Aorta (tissue), 5 donors: ENCODE measurements at regions of chr9 and their contacts with region 1.

Region 1: DNA sequence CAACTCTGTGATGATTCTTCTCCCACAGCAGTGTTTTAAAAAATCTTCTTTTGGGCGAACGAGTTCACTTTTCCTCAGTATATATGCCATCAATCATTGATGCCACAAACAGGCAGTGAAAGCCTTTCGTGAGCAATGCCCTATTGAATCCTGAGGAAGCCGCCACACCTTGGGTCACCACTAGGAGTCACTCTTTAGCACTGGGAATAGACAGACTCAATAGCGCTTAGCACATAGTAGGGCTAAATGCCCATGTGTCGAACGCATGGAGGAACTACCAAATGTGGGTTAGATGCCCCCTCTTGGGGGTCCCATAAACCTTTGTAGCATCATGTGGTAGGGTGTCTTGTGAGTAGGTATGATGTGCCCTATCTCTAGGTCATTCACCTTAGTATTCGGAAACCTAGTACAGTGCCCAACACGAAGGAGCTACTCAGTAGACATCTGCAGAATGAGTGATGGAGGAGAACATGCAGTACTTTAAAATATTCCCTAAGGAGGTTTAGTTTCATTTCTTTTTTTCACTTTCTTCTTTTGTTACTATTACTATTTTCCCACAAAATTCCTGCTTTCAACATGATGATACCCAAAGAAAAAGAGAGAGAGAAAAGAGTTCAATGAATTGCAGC is 603.7 kb downstream of the BNC2 start:
- DNase-seq: no peak
- ATAC-seq: no peak
- H3K4me3 ChIP-seq: peak overlapping the region in 1 of 2 donors; percentile 22
- H3K27ac ChIP-seq: no peak overlapping the region
- H3K4me1 ChIP-seq: no peaks in the 10 kb centered on the region
- H3K27me3 ChIP-seq: no peaks in the 10 kb centered on the region

Region 2: GRCh38 chr9:16012621-16013020 is 254.1 kb before region 1 on chr9:
- intact Hi-C with region 1: no loop called
- DNase-seq: no peak
- ATAC-seq: no peak
- H3K4me3 ChIP-seq: no peak overlapping the region
- H3K27ac ChIP-seq: no peak overlapping the region
- H3K4me1 ChIP-seq: no peaks in the 10 kb centered on the region
- H3K27me3 ChIP-seq: no peaks in the 10 kb centered on the region

Region 3: GRCh38 chr9:16213781-16214515 is 52.8 kb before region 1 on chr9:
- intact Hi-C with region 1: loop called (anchors 5 to 10 kb)
- DNase-seq: peak; percentile 76 to 81
- ATAC-seq: peak; percentile 94
- H3K4me3 ChIP-seq: no peak overlapping the region
- H3K27ac ChIP-seq: peak overlapping the region; percentile 19 to 79
- H3K4me1 ChIP-seq: peaks cover 0 to 2% of the 10 kb centered on the region in 2 donors
- H3K27me3 ChIP-seq: no peaks in the 10 kb centered on the region

Region 4: DNA sequence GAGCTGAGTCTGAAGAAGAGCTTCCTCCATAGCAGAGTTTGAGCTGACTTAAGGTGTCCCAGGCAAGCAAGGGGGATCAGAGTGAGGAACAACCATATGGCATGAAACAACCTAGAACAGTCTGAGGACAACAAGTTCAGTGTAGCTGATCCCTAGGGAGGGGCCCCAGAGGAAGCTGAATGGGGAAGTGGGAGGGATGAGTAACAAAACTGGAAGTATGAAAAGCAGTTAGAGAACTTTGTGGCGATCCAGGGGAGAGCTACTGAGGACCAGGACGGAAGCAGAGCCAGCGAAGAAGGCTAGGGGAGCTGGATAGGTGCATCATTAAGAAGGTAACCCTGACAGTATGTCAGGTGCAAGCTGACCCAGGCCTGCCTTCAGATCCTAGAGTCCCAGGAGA is 22.9 kb after region 1 on chr9:
- intact Hi-C with region 1: no loop called
- DNase-seq: peak in 1 of 2 donors; percentile 54
- ATAC-seq: no peak
- H3K4me3 ChIP-seq: no peak overlapping the region
- H3K27ac ChIP-seq: no peak overlapping the region
- H3K4me1 ChIP-seq: no peaks in the 10 kb centered on the region
- H3K27me3 ChIP-seq: no peaks in the 10 kb centered on the region

Region 5: GRCh38 chr9:16321461-16322119 is 54.8 kb after region 1 on chr9:
- intact Hi-C with region 1: no loop called
- DNase-seq: peak in 1 of 2 donors; percentile 79
- ATAC-seq: no peak
- H3K4me3 ChIP-seq: no peak overlapping the region
- H3K27ac ChIP-seq: no peak overlapping the region
- H3K4me1 ChIP-seq: peaks cover 4 to 6% of the 10 kb centered on the region in 2 donors
- H3K27me3 ChIP-seq: no peaks in the 10 kb centered on the region

Region 6: DNA sequence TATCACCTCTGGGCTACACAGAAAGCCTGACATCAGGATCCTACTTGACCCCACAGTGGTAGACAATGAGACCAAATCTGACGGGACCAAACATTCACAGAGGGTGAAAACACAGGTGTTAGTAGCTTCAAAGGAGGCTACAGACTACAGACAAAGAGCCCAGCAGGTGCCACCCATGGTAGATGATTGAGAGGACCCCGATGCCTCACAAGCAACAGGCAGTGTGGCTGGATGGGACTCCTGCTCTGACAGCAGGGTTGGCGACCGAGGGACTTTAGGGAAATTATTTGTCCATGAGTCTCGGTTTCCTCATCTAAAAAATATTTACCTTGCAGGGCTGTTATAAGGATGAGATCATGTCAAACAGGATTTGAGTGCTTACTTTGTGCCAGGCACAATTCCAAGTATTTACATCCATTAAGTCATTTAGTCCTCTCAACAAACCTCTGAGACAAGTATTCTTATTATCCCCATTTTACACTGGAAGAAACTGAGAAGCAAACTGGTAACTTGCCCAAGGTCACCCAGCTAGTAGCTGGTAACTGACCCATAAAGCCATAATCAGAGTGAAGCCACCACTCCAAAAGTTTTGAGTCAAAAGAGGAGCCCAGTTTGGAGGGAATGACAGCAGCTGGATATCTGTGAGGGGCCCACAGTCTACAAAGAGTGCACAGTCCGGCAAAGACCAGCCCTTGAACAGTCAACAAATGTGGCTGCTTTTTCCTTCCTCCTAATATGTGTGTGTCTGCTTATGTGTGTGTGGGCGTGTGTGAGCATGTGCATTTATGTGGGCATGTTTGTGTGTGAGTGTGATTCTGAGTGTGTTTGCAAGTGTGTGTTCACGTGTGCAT is 101.7 kb after region 1 on chr9:
- intact Hi-C with region 1: no loop called
- DNase-seq: no peak
- ATAC-seq: no peak
- H3K4me3 ChIP-seq: no peak overlapping the region
- H3K27ac ChIP-seq: no peak overlapping the region
- H3K4me1 ChIP-seq: no peaks in the 10 kb centered on the region
- H3K27me3 ChIP-seq: no peaks in the 10 kb centered on the region